ENCODE measurements at regions of chr17 and their contacts with region 1.

Region 1: GRCh38 chr17:57902800-57903759 is 52.1 kb downstream of the CUEDC1 start:
- DNase-seq: peak; percentile 80
- H3K4me3 ChIP-seq: no peak overlapping the region
- H3K27ac ChIP-seq: peak overlapping the region; percentile 71
- H3K4me1 ChIP-seq: peaks cover 19% of the 10 kb centered on the region
- H3K27me3 ChIP-seq: no peaks in the 10 kb centered on the region
- CTCF ChIP-seq: no peak
- POLR2A ChIP-seq: no peak

Region 2: DNA sequence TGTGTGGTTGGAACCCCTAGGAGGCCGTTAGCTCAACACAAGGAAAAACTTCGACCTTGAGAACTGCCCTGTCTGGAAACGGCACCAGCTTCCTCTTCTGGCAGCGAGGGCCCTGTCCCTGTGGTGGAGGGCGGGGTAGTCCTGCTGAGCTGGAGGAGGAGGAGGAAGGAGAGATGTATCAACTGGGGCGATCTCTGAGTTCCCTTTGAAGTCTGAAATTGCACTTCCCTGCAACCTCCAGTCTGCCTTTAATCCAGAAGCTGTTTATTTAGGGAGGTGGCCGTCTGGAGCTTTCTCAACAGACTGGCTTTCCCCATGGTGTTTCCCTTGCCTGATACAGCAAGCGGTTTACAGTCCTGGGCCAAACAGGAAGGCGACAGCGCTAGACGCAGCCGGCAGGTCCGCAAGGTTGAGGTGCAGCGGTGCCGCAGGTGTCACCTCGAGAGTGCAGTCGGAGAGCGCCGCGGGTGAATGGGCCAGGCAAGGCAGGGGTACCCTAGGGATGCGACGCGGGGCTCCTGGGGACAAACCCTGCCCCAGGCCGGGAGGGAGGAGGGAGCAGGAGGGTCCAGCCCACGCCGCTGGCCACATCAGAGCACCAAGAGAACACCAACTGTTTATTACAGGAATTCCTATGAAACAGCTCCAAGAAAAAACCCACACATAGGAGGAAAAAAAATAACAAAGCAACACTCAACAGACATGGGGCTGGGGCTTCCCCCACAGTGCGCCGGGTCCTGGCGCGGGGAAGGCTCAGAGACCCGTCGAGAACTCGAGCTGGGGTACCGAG is 41.9 kb before region 1 on chr17:
- CTCF ChIA-PET with region 1: interaction called, 13 read pairs
- POLR2A ChIA-PET with region 1: no interaction called
- dilution Hi-C with region 1: no loop called
- intact Hi-C with region 1: no loop called
- DNase-seq: peak; percentile 30
- H3K4me3 ChIP-seq: peak overlapping the region; percentile 21 to 49 (median 31)
- H3K27ac ChIP-seq: no peak overlapping the region
- H3K4me1 ChIP-seq: peaks cover 17% of the 10 kb centered on the region
- H3K27me3 ChIP-seq: no peaks in the 10 kb centered on the region
- CTCF ChIP-seq: no peak
- POLR2A ChIP-seq: no peak